ENCODE measurements at regions of chr2 and their contacts with region 1.

Region 1: DNA sequence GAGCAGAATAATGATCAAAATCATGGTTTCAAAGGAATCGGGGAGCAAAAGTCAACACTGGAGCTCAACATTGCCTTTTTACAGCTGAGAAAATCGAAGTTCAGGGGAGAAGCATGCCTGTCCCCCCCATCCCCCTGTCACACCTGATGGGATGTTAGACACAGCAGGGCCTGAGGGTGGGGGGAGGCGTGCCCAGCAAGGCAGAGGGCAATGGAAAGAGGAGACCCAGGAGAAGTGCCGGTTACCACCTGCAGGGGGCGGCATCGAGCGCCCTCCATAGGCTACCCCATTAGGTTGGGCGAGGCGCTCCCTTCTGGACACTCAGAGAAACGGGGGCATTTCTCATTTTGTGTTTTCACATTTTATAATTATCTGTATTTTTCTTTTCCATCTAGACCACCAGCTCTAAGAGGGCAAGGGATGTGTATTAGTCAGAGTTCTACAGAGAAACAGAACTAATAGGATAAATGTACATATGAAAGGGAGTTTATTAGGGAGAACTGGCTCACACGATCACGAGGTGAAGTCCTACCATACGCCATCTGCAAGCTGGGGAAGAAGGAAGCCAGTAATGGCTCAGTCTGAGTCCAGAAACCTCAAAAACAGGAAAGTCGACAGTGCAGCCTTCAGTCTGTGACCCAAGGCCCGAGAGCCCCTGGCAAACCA is 271.3 kb downstream of the LRATD1 start:
- DNase-seq: peak; percentile 40
- H3K4me3 Mint-ChIP-seq: no peak overlapping the region
- H3K27ac Mint-ChIP-seq: no peak overlapping the region
- H3K4me1 Mint-ChIP-seq: no peaks in the 10 kb centered on the region
- H3K27me3 Mint-ChIP-seq: peaks cover 2% of the 10 kb centered on the region

Region 2: DNA sequence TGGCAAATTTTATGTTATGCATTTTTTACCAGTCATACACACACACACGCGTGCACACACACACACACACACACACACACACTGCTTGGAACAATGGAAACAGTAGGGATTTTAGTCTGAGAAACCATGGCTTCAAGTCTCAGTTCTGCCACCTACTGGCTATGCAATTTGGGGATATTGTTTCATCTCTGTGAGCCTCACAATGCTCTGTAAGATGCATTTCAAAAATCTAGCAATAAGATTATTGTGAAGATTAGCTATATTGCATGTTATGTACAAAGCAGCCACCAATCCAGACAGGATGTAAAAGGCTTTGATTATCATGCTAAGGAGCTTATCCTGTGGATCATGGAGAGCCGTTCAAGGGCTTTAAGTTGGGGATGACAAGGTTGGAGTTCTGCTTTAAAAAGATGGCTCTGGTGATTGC is 255.9 kb after region 1 on chr2:
- intact Hi-C with region 1: loop called (anchors 1 kb)
- DNase-seq: no peak
- H3K4me3 Mint-ChIP-seq: no peak overlapping the region
- H3K27ac Mint-ChIP-seq: no peak overlapping the region
- H3K4me1 Mint-ChIP-seq: peaks cover 17% of the 10 kb centered on the region
- H3K27me3 Mint-ChIP-seq: peaks cover 17% of the 10 kb centered on the region

Measured in activated T-helper 1 cell treated with anti-CD3 and anti-CD28 coated beads, Interleukin-12 subunit alpha, Interleukin-12 subunit beta, Interleukin-2, Interleukin-4 antibody, amounts not matched to agents 30 ng/mL and 10 ng/mL and 1 ng/mL, durations not matched to agents 14 hours and 24 hours and 36 hours (primary cell).